ENCODE measurements at regions of chr4 and their contacts with region 1.

Region 1: GRCh38 chr4:2241410-2242353 is at the starts of genes HAUS3 and POLN:
- DNase-seq: peak; percentile 96
- H3K4me3 ChIP-seq: peak within 1 kb of the TSS; percentile 76
- H3K27ac ChIP-seq: peak within 1 kb of the TSS; percentile 78 to 81
- H3K4me1 ChIP-seq: peaks cover 10% of the 10 kb centered on the region
- H3K27me3 ChIP-seq: no peaks in the 10 kb centered on the region
- CTCF ChIP-seq: peak in 1 of 4 experiments; percentile 15
- POLR2A ChIP-seq: peak; percentile 95
- total RNA-seq, gene HAUS3: 21.1 to 24.2 TPM
- total RNA-seq, gene POLN: 3.8 to 15.2 TPM

Region 2: GRCh38 chr4:1712216-1713002 is 529.3 kb before region 1 on chr4 and contains the start of gene SLBP:
- intact Hi-C with region 1: loop called (anchors 10 kb)
- DNase-seq: peak; percentile 98
- H3K4me3 ChIP-seq: peak within 1 kb of the TSS; percentile 58 to 89
- H3K27ac ChIP-seq: peak within 1 kb of the TSS; percentile 93 to 99
- H3K4me1 ChIP-seq: peaks cover 9% of the 10 kb centered on the region
- H3K27me3 ChIP-seq: no peaks in the 10 kb centered on the region
- CTCF ChIP-seq: no peak
- POLR2A ChIP-seq: peak; percentile 91
- total RNA-seq, gene SLBP: 46.7 to 84.5 TPM

Region 3: DNA sequence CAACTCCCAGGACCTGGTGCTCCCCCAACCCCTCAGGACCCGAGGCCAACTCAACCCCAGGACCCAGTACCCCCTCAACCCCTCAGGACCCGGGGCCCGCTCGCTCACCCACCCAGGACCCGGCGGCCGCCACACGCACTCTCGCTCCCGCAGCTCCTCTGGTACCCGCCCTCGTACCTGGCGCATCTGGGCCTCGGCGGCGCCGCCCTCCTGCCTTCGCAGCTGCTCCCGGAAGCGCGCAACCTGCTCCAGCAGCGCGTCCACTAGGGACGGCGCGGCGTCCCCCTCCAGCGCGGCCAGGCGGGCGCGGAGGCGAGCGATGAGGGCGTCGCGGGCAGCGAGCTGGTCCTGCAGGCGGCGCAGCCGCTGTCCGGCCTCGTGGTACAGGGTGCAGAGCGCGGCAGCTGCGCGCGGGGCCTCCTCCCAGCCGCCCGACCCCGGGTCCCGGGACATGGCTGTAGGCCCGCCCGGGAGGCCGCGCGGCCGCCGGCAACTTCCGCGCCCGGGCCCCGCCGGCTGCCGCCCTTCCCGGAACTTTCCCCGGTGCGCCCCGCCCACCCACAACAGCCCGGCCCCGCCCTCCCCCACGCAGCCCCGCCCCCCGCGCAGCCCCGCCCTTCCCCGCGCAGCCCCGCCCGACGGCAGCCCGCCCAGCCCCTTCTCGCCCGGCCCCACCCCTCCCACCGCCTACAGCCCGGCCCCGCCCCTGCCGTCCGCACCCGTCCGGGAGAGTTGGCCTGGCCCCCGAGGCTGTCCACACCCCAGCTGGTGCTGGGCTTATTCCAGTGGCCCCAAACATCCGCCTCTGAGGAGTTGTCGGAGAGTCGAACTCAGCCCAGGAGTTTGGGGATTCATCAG is 514.4 kb after region 1 on chr4 and contains the start of gene TNIP2:
- intact Hi-C with region 1: loop called (anchors 10 kb)
- DNase-seq: peak; percentile 83
- H3K4me3 ChIP-seq: peak within 1 kb of the TSS; percentile 73 to 87
- H3K27ac ChIP-seq: peak within 1 kb of the TSS; percentile 79 to 87
- H3K4me1 ChIP-seq: peaks cover 3% of the 10 kb centered on the region
- H3K27me3 ChIP-seq: no peaks in the 10 kb centered on the region
- CTCF ChIP-seq: peak in 3 of 4 experiments; percentile 30 to 58 (median 56)
- POLR2A ChIP-seq: peak; percentile 70
- total RNA-seq, gene TNIP2: 54.8 to 94.0 TPM

Region 4: GRCh38 chr4:3201718-3202702 is 960.3 kb after region 1 on chr4:
- intact Hi-C with region 1: no loop called
- DNase-seq: no peak
- H3K4me3 ChIP-seq: no peak overlapping the region
- H3K27ac ChIP-seq: no peak overlapping the region
- H3K4me1 ChIP-seq: no peaks in the 10 kb centered on the region
- H3K27me3 ChIP-seq: no peaks in the 10 kb centered on the region
- CTCF ChIP-seq: no peak
- POLR2A ChIP-seq: no peak